Heart left ventricle (tissue), 16 donors: ENCODE measurements at regions of chr4 and their contacts with region 1.

Region 1: GRCh38 chr4:169566021-169566818 is 46.2 kb downstream of the NEK1 start:
- DNase-seq: peak in 2 of 5 donors; percentile 17 to 32
- ATAC-seq: peak; percentile 61 to 78 (median 75)
- H3K4me3 ChIP-seq: peak overlapping the region in 4 of 12 donors; percentile 8 to 26 (median 13)
- H3K27ac ChIP-seq: peak overlapping the region in 2 of 12 donors; percentile 0 to 17
- H3K4me1 ChIP-seq: peaks cover 0 to 17% (median 6%) of the 10 kb centered on the region in 12 donors
- H3K27me3 ChIP-seq: no peaks in the 10 kb centered on the region
- CTCF ChIP-seq: peak; percentile 56 to 86 (median 72)
- POLR2A ChIP-seq: no peak

Region 2: GRCh38 chr4:168995537-168996295 is 570.5 kb before region 1 on chr4:
- intact Hi-C with region 1: loop called in 5 of 10 experiments (anchors 5 to 10 kb)
- DNase-seq: no peak
- ATAC-seq: peak; percentile 54 to 78 (median 72)
- H3K4me3 ChIP-seq: no peak overlapping the region
- H3K27ac ChIP-seq: no peak overlapping the region
- H3K4me1 ChIP-seq: peaks cover 0 to 32% (median 10%) of the 10 kb centered on the region in 12 donors
- H3K27me3 ChIP-seq: no peaks in the 10 kb centered on the region
- CTCF ChIP-seq: peak in 8 of 12 donors; percentile 19 to 52 (median 38)
- POLR2A ChIP-seq: no peak

Region 3: GRCh38 chr4:169485791-169486742 is 80.2 kb before region 1 on chr4:
- intact Hi-C with region 1: no loop called
- DNase-seq: no peak
- ATAC-seq: peak in 2 of 4 donors; percentile 53 to 63
- H3K4me3 ChIP-seq: peak overlapping the region in 1 of 12 donors; percentile 8
- H3K27ac ChIP-seq: no peak overlapping the region
- H3K4me1 ChIP-seq: peaks cover 0 to 5% (median 0%) of the 10 kb centered on the region in 12 donors
- H3K27me3 ChIP-seq: no peaks in the 10 kb centered on the region
- CTCF ChIP-seq: peak; percentile 18 to 72 (median 58)
- POLR2A ChIP-seq: no peak

Region 4: DNA sequence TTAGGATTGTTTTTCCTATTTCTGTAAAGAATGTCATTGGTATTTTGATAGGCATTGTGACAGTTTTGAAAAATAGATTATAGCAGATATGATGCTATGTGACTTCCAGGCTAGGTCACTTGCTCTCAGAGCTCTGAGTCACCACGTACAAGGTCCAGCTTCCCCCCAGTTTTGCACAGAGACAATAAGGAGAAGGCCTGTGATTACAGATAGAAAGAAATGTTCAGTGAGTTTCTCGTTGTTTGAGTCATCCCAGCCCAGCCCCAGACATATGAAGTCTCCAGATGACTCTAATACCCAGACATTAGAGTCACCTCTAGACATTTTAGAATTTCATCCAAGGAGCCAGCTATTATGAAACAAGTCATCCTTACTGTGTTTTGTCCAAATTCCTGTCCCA is 402.8 kb after region 1 on chr4:
- intact Hi-C with region 1: no loop called
- DNase-seq: no peak
- ATAC-seq: no peak
- H3K4me3 ChIP-seq: no peak overlapping the region
- H3K27ac ChIP-seq: no peak overlapping the region
- H3K4me1 ChIP-seq: peaks cover 0 to 4% (median 0%) of the 10 kb centered on the region in 12 donors
- H3K27me3 ChIP-seq: no peaks in the 10 kb centered on the region
- CTCF ChIP-seq: no peak
- POLR2A ChIP-seq: no peak